Posterior cingulate gyrus (tissue), 11 donors: ENCODE measurements at regions of chr20 and their contacts with region 1.

Region 1: GRCh38 chr20:47379433-47380150 is 23.1 kb upstream of the ZMYND8 start:
- DNase-seq: peak in 2 of 10 donors; percentile 30 to 64

Region 2: GRCh38 chr20:46752728-46753127 is 626.9 kb before region 1 on chr20:
- intact Hi-C with region 1: loop called (anchors 5 kb)
- DNase-seq: peak in 8 of 10 donors; percentile 41 to 90 (median 60)

Region 3: GRCh38 chr20:47196091-47197081 is 183.2 kb before region 1 on chr20:
- intact Hi-C with region 1: loop called (anchors 1 kb)
- DNase-seq: peak; percentile 44 to 96 (median 76)

Region 4: GRCh38 chr20:47272893-47273590 is 106.5 kb before region 1 on chr20:
- intact Hi-C with region 1: loop called (anchors 1 kb)
- DNase-seq: peak in 2 of 10 donors; percentile 38 to 50

Region 5: GRCh38 chr20:47351643-47352331 is 27.8 kb before region 1 on chr20:
- intact Hi-C with region 1: no loop called
- DNase-seq: no peak

Region 6: GRCh38 chr20:47412083-47412482 is 32.5 kb after region 1 on chr20:
- intact Hi-C with region 1: no loop called
- DNase-seq: no peak